ENCODE measurements at regions of chr6 and their contacts with region 1.

Region 1: GRCh38 chr6:2765166-2765895 is at the start of gene WRNIP1:
- DNase-seq: peak; percentile 93 to 98
- H3K4me3 ChIP-seq: peak within 1 kb of the TSS; percentile 83
- H3K27ac ChIP-seq: peak within 1 kb of the TSS; percentile 63
- H3K4me1 ChIP-seq: peaks cover 13% of the 10 kb centered on the region
- H3K27me3 ChIP-seq: no peaks in the 10 kb centered on the region
- CTCF ChIP-seq: no peak; the same call in 1 of the 2 replicates
- total RNA-seq, gene WRNIP1: 61.4 and 69.5 TPM in 2 replicates

Region 2: GRCh38 chr6:1596088-1596852 is 1169.1 kb before region 1 on chr6:
- CTCF ChIA-PET with region 1: no interaction called
- POLR2A ChIA-PET with region 1: no interaction called
- intact Hi-C with region 1: loop called (anchors 10 kb)
- DNase-seq: peak; percentile 43 to 61
- H3K4me3 ChIP-seq: no peak overlapping the region
- H3K27ac ChIP-seq: no peak overlapping the region
- H3K4me1 ChIP-seq: no peaks in the 10 kb centered on the region
- H3K27me3 ChIP-seq: no peaks in the 10 kb centered on the region
- CTCF ChIP-seq: peak; percentile 88

Region 3: DNA sequence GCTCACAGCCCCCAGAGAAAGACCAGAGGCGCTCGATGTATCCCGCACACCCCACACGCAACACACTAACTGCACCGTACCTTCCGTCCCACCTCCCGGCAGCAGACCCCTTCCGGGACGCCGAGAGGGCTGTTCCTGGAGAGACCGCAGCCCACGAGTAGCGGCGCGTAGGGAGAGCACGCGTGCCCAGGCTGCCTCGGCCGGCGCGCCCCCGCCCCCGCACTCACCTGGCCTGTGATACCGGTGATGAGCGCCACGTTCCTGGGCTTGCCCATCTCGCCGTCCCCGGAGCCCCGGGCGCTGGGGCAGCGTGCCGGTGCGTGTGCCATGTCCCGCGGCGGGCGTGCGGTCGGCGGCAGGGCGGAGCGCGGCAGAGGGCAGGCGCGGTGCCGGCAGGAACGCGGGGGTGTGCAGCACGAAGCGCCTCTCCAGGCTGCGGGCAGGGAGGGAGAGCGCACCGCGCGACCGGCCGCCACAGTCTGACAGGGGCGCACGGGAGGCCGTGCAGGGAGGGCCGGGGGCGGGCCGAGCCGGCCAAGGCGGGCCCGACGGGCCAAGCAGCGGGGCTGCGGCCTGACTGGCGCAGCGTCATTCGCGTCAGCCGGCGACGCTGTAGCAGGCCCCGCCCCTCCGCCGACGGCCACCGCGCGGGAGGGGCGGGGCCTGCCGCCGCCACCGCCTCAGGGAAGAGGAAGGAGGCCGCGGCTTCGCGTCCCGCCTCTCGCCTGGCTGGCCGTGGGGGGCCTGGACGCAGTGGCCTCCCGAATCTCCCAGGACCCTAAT is 520.0 kb before region 1 on chr6 and contains the start of gene GMDS:
- CTCF ChIA-PET with region 1: no interaction called
- POLR2A ChIA-PET with region 1: no interaction called
- intact Hi-C with region 1: loop called (anchors 5 kb)
- DNase-seq: peak; percentile 57 to 87
- H3K4me3 ChIP-seq: peak within 1 kb of the TSS; percentile 86
- H3K27ac ChIP-seq: peak within 1 kb of the TSS; percentile 97
- H3K4me1 ChIP-seq: peaks cover 10% of the 10 kb centered on the region
- H3K27me3 ChIP-seq: no peaks in the 10 kb centered on the region
- CTCF ChIP-seq: no peak
- total RNA-seq, gene GMDS: 30.1 and 38.3 TPM in 2 replicates

Region 4: DNA sequence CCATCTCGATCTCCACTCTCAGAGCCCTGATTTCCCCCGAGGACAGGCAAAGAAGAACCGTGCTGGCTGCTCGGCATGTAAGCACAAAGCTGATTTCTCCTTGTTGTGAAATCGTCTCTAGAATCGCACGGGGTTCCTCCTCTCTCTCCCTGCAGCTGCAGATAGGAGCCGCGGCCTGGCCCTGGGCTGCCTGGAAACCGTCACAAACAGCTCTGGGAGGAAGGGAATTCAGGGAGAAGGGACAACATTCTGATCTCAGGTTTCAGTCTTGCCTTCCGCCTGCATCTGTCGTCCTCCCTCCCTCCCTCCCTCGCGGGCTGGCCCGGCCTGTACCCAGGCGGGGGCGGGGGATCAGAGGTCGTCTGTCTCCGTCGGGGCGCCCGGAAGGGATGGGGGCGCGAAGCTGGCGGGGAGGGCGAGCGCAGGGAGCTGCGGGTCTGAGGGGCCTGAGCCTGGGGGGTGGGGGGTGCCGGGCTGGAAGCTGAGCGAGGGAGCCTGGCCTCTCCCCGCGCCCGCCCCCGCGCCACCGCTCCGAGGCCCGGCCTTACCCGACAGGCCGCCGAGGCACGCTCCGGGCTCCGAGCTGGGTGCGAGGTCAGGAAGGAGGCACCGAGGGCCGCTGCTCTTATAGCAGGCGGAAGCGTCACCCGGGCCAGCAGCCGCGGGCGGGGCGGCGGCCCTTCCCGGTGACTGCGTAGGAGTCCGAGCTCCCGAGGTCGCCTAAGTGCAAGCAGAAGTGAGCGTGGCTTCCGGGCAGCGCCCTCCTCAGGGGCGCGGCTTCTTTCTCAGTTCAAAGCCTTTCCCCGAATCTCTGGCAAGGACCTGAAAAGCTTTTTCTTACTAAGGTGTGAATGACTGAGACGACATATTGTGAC is 76.2 kb after region 1 on chr6 and contains the start of gene SERPINB1:
- CTCF ChIA-PET with region 1: no interaction called
- POLR2A ChIA-PET with region 1: interaction called, 6 read pairs
- intact Hi-C with region 1: loop called (anchors 2 kb)
- DNase-seq: peak; percentile 87 to 94
- H3K4me3 ChIP-seq: peak within 1 kb of the TSS; percentile 64
- H3K27ac ChIP-seq: peak within 1 kb of the TSS; percentile 97
- H3K4me1 ChIP-seq: peaks cover 55% of the 10 kb centered on the region
- H3K27me3 ChIP-seq: no peaks in the 10 kb centered on the region
- CTCF ChIP-seq: no peak
- total RNA-seq, gene SERPINB1: 82.3 and 93.9 TPM in 2 replicates

Region 5: DNA sequence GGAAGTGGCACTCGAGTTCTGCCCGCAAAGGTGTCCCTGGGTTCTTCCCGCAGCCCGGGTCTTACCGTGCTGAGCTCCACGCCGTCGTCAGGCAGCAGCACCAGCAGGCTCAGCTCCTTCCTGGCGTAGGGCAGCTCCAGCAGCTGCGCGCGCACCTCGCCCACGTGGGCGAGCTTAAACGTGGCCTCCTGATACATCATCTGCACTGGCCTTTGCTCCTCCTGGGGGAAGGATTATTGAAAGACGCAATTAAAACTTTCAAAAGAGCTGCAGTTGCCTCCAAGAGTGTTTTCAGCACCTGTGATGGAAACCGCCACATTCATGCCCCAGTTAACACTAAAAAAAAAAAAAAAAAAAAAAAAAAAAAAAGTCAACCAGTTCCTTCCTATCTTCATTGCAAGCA is 126.4 kb after region 1 on chr6:
- CTCF ChIA-PET with region 1: no interaction called
- POLR2A ChIA-PET with region 1: no interaction called
- intact Hi-C with region 1: no loop called
- DNase-seq: no peak
- H3K4me3 ChIP-seq: no peak overlapping the region
- H3K27ac ChIP-seq: no peak overlapping the region
- H3K4me1 ChIP-seq: no peaks in the 10 kb centered on the region
- H3K27me3 ChIP-seq: no peaks in the 10 kb centered on the region
- CTCF ChIP-seq: no peak

Region 6: DNA sequence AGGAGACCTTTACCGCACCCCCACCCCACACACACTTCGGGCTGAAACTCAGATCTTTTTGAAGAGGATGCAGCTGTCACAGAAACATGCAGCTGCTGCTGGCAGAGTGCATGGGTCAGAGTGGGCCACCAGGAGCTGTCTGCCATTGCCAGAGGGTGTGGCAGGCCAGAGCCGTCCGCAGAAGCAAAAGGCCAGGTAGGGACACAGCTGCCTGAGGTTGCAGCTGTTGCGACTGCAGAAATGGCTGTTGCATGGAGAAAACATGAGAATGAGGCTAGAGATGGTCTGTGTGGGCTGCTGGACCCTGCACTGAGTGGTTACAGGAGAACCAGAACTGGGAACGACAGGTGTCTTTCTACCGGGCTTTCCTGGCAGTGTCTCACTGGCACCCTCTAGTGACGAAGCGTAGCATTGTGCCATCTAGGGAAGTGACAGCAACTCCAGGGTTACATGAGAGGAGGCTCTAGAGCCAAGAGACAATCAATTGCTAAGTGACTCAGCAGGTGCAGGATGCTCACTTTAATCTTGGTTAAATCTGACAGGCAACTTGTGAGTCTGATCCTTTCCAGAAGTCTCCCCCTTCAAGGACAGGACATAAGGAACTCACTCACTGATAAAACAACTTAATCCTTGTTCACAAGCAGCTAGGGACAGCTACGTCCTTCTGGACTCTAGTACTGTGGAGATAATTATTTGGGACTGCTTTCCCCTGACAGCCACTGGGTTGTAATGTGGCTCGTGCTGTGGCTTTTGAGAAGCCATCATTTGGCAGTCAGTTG is 166.8 kb after region 1 on chr6:
- CTCF ChIA-PET with region 1: interaction called, 12 read pairs
- POLR2A ChIA-PET with region 1: no interaction called
- intact Hi-C with region 1: no loop called
- DNase-seq: peak; percentile 70 to 84
- H3K4me3 ChIP-seq: no peak overlapping the region
- H3K27ac ChIP-seq: peak overlapping the region; percentile 46
- H3K4me1 ChIP-seq: peaks cover 3% of the 10 kb centered on the region; the same call in 1 of the 2 replicates
- H3K27me3 ChIP-seq: no peaks in the 10 kb centered on the region
- CTCF ChIP-seq: peak; percentile 83